Activated CD4-positive, alpha-beta T cell treated with anti-CD3 and anti-CD28 coated beads, Interleukin-2, amount 10 ng/mL, durations not matched to agents 24 days and 14 days (primary cell): ENCODE measurements at regions of chr2 and their contacts with region 1.

Region 1: GRCh38 chr2:177263451-177264208 is 897 bp downstream of the NFE2L2 start:
- DNase-seq: peak; percentile 99
- H3K4me3 Mint-ChIP-seq: peak overlapping the region; percentile 89
- H3K27ac Mint-ChIP-seq: peak overlapping the region; percentile 100
- H3K4me1 Mint-ChIP-seq: peaks cover 53% of the 10 kb centered on the region
- H3K27me3 Mint-ChIP-seq: no peaks in the 10 kb centered on the region

Region 2: DNA sequence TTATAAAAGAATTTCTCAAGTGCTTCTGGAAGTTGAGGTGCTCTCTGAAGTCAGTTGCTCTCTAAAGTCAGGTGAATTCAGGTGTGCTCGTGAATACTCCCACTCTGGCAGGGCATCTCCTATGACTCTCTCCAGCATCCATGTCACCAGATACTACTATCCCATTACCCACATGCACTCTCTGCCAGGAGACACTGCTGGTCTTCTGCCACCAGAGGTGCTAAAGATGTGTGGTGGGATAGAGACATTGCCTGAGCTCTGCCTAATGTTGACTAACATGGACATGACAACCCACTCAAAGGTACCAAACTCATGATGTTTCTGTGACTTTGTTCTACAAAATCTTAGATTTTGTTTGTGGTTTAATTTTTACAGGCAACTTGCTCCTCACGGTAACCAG is 157.4 kb before region 1 on chr2:
- intact Hi-C with region 1: no loop called
- DNase-seq: peak; percentile 53
- H3K4me3 Mint-ChIP-seq: no peak overlapping the region
- H3K27ac Mint-ChIP-seq: no peak overlapping the region
- H3K4me1 Mint-ChIP-seq: no peaks in the 10 kb centered on the region
- H3K27me3 Mint-ChIP-seq: peaks cover 21% of the 10 kb centered on the region

Region 3: GRCh38 chr2:177164584-177165052 is 99.0 kb before region 1 on chr2:
- intact Hi-C with region 1: loop called (anchors 1 kb)
- DNase-seq: peak; percentile 94
- H3K4me3 Mint-ChIP-seq: no peak overlapping the region
- H3K27ac Mint-ChIP-seq: no peak overlapping the region
- H3K4me1 Mint-ChIP-seq: peaks cover 27% of the 10 kb centered on the region
- H3K27me3 Mint-ChIP-seq: peaks cover 11% of the 10 kb centered on the region

Region 4: GRCh38 chr2:177239932-177240630 is 23.5 kb before region 1 on chr2:
- intact Hi-C with region 1: loop called (anchors 1 kb)
- DNase-seq: peak; percentile 76
- H3K4me3 Mint-ChIP-seq: peak overlapping the region; percentile 63
- H3K27ac Mint-ChIP-seq: peak overlapping the region; percentile 85
- H3K4me1 Mint-ChIP-seq: peaks cover 57% of the 10 kb centered on the region
- H3K27me3 Mint-ChIP-seq: no peaks in the 10 kb centered on the region

Region 5: DNA sequence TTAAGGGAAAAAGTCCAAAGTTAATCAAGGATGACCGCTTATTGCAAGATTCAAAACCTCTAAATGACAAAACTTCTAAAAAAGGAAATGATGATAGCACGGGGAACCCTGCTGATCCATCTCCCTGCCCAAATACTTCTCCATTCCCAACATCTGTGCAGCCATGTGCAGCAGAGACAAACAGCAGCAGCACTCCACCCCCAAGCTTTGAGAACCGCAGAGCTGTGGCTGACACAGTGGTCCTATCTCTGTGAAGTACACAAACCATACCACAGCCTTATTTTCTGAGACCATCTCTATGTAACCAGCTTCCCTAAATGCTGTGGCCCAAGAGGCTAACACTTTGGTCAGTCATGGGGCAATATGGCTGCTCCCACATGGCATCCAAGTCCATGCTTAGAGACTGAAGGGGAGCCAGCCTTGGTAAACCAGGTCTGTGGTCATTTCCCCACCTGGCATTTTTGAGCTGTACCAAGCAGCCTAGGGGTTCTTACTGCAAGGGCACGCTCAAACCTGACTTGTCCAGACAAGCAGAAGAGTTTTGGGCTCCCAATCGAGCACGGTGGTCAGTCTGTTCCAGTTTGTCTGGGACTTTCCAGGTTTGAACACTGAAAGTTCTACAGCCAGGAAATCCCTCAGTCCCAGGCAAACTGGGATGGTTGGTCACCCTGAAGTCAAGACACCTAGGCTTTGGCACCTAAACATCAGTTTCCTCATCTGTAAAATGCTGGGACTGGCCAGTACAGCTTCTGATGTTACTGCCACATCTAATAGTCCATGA is 18.0 kb after region 1 on chr2:
- intact Hi-C with region 1: no loop called
- DNase-seq: no peak
- H3K4me3 Mint-ChIP-seq: no peak overlapping the region
- H3K27ac Mint-ChIP-seq: no peak overlapping the region
- H3K4me1 Mint-ChIP-seq: peaks cover 6% of the 10 kb centered on the region
- H3K27me3 Mint-ChIP-seq: no peaks in the 10 kb centered on the region

Region 6: GRCh38 chr2:177296040-177296439 is 32.4 kb after region 1 on chr2:
- intact Hi-C with region 1: loop called (anchors 2 kb)
- DNase-seq: no peak
- H3K4me3 Mint-ChIP-seq: no peak overlapping the region
- H3K27ac Mint-ChIP-seq: no peak overlapping the region
- H3K4me1 Mint-ChIP-seq: peaks cover 34% of the 10 kb centered on the region
- H3K27me3 Mint-ChIP-seq: no peaks in the 10 kb centered on the region

Region 7: GRCh38 chr2:177363332-177363731 is 99.7 kb after region 1 on chr2:
- intact Hi-C with region 1: no loop called
- DNase-seq: no peak
- H3K4me3 Mint-ChIP-seq: no peak overlapping the region
- H3K27ac Mint-ChIP-seq: no peak overlapping the region
- H3K4me1 Mint-ChIP-seq: no peaks in the 10 kb centered on the region
- H3K27me3 Mint-ChIP-seq: no peaks in the 10 kb centered on the region

Region 8: DNA sequence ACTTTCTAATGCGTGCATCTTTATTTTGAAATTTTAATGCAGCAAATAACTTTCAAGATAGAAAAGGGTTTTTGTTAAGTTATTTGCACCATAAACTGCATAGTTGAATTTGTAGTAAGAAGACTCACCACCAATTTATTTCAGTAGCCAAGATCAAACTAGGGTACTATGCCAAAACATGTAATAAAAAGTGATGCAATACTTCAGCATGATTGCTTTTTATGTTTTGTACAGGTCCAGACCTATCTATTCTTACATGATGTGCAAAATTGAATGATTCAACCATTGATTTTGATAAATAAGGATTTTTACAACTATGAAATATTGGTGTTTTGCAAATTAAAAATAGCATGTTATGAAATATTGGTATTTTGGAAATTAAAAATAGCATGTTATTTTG is 155.6 kb after region 1 on chr2:
- intact Hi-C with region 1: loop called (anchors 5 kb)
- DNase-seq: no peak
- H3K4me3 Mint-ChIP-seq: no peak overlapping the region
- H3K27ac Mint-ChIP-seq: no peak overlapping the region
- H3K4me1 Mint-ChIP-seq: peaks cover 14% of the 10 kb centered on the region
- H3K27me3 Mint-ChIP-seq: no peaks in the 10 kb centered on the region

Region 9: DNA sequence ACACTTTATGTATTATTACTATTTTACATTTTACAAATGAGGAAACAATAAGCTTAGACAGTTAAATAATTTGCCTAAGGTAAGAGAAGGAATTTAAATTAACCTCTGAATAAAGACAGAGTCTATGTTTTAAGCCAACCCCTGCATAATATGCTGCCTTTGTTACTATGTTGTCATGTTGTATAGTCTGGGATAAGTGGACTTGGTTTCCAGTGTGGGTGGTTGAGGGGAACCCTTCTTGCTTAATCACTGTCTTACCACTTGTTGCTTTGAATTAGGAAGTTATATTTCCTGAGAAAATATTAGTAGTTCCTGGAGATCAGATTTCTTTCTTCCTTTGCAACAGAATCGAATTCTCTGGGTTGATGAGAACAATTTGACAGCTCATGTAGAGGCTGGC is 181.6 kb after region 1 on chr2:
- intact Hi-C with region 1: no loop called
- DNase-seq: no peak
- H3K4me3 Mint-ChIP-seq: no peak overlapping the region
- H3K27ac Mint-ChIP-seq: no peak overlapping the region
- H3K4me1 Mint-ChIP-seq: peaks cover 2% of the 10 kb centered on the region
- H3K27me3 Mint-ChIP-seq: no peaks in the 10 kb centered on the region

Region 10: GRCh38 chr2:177724398-177725287 is 461.0 kb after region 1 on chr2:
- intact Hi-C with region 1: loop called (anchors 10 kb)
- DNase-seq: peak; percentile 84
- H3K4me3 Mint-ChIP-seq: no peak overlapping the region
- H3K27ac Mint-ChIP-seq: no peak overlapping the region
- H3K4me1 Mint-ChIP-seq: peaks cover 2% of the 10 kb centered on the region
- H3K27me3 Mint-ChIP-seq: peaks cover 33% of the 10 kb centered on the region